ENCODE measurements at regions of chr10 and their contacts with region 1.

Region 1: DNA sequence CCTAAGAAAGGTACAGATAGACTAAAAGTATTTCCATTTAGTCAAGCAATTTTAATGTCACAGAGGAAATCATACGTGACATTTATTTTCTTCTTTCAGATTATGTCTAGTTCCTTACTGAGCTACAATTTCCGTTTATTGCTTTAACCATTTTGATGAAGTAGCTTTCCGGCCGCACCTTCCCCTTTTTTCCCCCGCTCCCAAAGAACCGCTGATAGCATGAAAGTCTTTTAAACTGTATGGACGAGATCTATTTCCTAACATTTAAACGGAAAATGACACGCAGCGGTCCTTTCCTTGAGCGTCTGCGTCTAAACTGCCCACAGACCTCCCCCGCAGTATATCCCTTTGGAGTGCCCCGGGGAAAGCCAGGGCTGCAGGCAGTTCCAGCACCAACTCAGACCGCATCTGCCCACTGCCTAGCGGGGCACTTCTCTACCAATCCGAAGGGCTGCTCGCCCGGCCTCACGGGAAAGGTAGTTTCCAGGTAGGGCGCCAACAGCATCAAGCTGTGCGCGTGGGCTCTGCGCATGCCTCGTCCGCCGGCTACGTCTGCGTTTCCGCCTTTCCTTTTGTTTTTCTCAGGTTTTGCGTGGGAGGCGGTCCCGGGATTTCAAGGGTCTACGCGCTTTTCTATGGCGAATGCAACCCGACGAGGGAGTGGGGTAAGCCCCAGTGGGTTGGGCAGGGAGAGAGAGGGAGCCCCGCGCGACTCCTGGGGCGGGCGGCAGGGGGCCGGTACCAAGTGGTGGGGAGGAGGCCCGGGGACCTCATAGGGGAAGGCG is at the start of gene ZNF33A:
- DNase-seq: peak; percentile 97
- ATAC-seq: peak; percentile 84
- H3K4me3 ChIP-seq: peak within 1 kb of the TSS; percentile 72 to 78 (median 73)
- H3K4me3 Mint-ChIP-seq: peak within 1 kb of the TSS; percentile 80
- H3K27ac ChIP-seq: peak within 1 kb of the TSS; percentile 99
- H3K27ac Mint-ChIP-seq: peak within 1 kb of the TSS; percentile 99
- H3K4me1 ChIP-seq: peaks cover 16 to 17% of the 10 kb centered on the region in 2 donors
- H3K4me1 Mint-ChIP-seq: peaks cover 31% of the 10 kb centered on the region
- H3K27me3 ChIP-seq: no peaks in the 10 kb centered on the region
- H3K27me3 Mint-ChIP-seq: no peaks in the 10 kb centered on the region
- CTCF ChIP-seq: no peak
- total RNA-seq, gene ZNF33A: 86.6 and 96.1 TPM in 2 replicates

Region 2: GRCh38 chr10:37857287-37858211 is 152.8 kb before region 1 on chr10 and contains the start of gene ZNF248:
- CTCF ChIA-PET with region 1: no interaction called
- POLR2A ChIA-PET with region 1: no interaction called
- intact Hi-C with region 1: loop called (anchors 1 kb)
- DNase-seq: peak; percentile 96
- ATAC-seq: peak; percentile 96
- H3K4me3 ChIP-seq: peak within 1 kb of the TSS; percentile 70 to 97 (median 88)
- H3K4me3 Mint-ChIP-seq: peak within 1 kb of the TSS; percentile 99
- H3K27ac ChIP-seq: peak within 1 kb of the TSS; percentile 85 to 95
- H3K27ac Mint-ChIP-seq: peak within 1 kb of the TSS; percentile 99
- H3K4me1 ChIP-seq: peaks cover 13 to 14% of the 10 kb centered on the region in 2 donors
- H3K4me1 Mint-ChIP-seq: peaks cover 35% of the 10 kb centered on the region
- H3K27me3 ChIP-seq: no peaks in the 10 kb centered on the region
- H3K27me3 Mint-ChIP-seq: no peaks in the 10 kb centered on the region
- CTCF ChIP-seq: no peak
- total RNA-seq, gene ZNF248: 18.2 and 19.5 TPM in 2 replicates

Region 3: GRCh38 chr10:38038107-38038931 is 28.0 kb after region 1 on chr10:
- CTCF ChIA-PET with region 1: no interaction called
- POLR2A ChIA-PET with region 1: no interaction called
- intact Hi-C with region 1: loop called (anchors 1 kb)
- DNase-seq: peak; percentile 64
- ATAC-seq: peak; percentile 90
- H3K4me3 ChIP-seq: peak overlapping the region in 4 of 5 experiments; percentile 22 to 48 (median 35)
- H3K4me3 Mint-ChIP-seq: peak overlapping the region; percentile 76
- H3K27ac ChIP-seq: peak overlapping the region; percentile 76 to 81
- H3K27ac Mint-ChIP-seq: peak overlapping the region; percentile 89
- H3K4me1 ChIP-seq: peaks cover 9 to 14% of the 10 kb centered on the region in 2 donors
- H3K4me1 Mint-ChIP-seq: peaks cover 32% of the 10 kb centered on the region
- H3K27me3 ChIP-seq: no peaks in the 10 kb centered on the region
- H3K27me3 Mint-ChIP-seq: no peaks in the 10 kb centered on the region
- CTCF ChIP-seq: no peak